Activated naive CD4-positive, alpha-beta T cell treated with anti-CD3 and anti-CD28 coated beads for 36 hours (primary cell): ENCODE measurements at regions of chr7 and their contacts with region 1.

Region 1: GRCh38 chr7:23597094-23598091 is at the start of gene CCDC126:
- DNase-seq: peak; percentile 83
- H3K4me3 Mint-ChIP-seq: peak within 1 kb of the TSS; percentile 83
- H3K27ac Mint-ChIP-seq: peak within 1 kb of the TSS; percentile 20
- H3K4me1 Mint-ChIP-seq: peaks cover 63% of the 10 kb centered on the region
- H3K27me3 Mint-ChIP-seq: no peaks in the 10 kb centered on the region
- total RNA-seq, gene CCDC126: 5.3 to 5.7 TPM

Region 2: DNA sequence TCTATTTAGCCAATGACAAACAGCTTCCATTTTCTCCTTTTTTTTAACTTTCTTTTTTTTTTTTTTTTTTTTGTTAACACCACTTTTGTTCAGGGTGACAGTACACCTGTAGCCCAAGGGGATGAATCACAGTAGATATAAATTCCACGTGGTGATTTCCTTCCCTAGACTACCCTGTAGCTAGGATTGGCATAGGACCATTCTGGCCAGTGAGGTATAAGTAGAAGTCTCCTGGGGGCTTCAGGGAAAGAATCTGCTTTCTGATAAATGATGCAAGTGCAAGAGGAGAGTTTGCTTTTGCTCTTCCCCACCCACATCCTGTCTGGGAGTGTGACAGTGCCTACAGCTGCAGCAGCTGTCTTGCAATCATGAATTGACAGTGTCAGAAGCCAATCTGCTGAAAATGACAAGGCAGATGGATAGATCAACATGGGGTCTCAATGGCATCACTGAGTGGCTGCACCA is 711.6 kb before region 1 on chr7:
- CTCF ChIA-PET with region 1: no interaction called
- intact Hi-C with region 1: loop called (anchors 1 kb)
- DNase-seq: peak; percentile 88
- H3K4me3 Mint-ChIP-seq: peak overlapping the region; percentile 64
- H3K27ac Mint-ChIP-seq: peak overlapping the region; percentile 98
- H3K4me1 Mint-ChIP-seq: peaks cover 54% of the 10 kb centered on the region
- H3K27me3 Mint-ChIP-seq: no peaks in the 10 kb centered on the region

Region 3: DNA sequence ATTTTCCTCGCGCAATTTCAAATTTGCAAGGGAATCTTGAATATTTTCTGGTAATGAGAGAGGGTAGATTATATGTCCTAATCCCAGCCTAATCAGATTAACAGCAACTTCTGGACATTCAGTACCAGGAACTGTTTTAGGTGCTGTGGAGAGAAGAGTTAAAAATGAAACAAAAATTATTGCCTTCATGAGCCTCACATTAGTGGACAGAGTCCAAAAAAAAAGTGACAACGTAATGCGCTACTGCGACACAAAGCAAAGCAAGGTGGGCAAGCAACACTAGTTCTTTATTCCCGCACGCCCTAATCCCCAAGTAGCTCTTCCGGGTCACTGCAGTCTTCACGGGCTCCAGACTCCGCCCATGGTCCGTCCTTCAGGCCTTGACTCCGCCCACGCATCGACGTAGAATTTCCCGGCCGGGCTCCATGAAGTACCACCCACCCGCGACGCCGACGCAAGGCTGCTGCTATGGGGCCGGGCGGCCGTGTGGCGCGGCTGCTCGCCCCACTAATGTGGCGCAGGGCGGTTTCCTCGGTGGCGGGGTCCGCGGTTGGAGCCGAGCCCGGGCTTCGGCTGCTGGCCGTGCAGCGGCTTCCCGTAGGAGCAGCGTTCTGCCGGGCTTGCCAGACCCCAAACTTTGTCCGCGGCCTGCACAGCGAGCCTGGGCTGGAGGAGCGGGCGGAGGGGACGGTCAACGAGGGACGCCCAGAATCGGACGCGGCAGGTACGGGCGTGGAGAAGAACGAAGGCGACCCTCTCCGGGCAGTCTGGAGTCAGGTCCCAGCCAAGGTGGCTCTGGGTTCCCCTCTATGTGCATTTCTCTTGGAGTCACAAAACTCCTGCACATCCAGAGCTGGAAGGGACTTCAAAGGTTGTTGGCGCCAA is 298.3 kb before region 1 on chr7 and contains the start of gene MALSU1:
- CTCF ChIA-PET with region 1: no interaction called
- intact Hi-C with region 1: loop called (anchors 1 kb)
- DNase-seq: peak; percentile 99
- H3K4me3 Mint-ChIP-seq: peak within 1 kb of the TSS; percentile 96
- H3K27ac Mint-ChIP-seq: peak within 1 kb of the TSS; percentile 95
- H3K4me1 Mint-ChIP-seq: peaks cover 30% of the 10 kb centered on the region
- H3K27me3 Mint-ChIP-seq: no peaks in the 10 kb centered on the region
- total RNA-seq, gene MALSU1: 98.4 to 101 TPM

Region 4: DNA sequence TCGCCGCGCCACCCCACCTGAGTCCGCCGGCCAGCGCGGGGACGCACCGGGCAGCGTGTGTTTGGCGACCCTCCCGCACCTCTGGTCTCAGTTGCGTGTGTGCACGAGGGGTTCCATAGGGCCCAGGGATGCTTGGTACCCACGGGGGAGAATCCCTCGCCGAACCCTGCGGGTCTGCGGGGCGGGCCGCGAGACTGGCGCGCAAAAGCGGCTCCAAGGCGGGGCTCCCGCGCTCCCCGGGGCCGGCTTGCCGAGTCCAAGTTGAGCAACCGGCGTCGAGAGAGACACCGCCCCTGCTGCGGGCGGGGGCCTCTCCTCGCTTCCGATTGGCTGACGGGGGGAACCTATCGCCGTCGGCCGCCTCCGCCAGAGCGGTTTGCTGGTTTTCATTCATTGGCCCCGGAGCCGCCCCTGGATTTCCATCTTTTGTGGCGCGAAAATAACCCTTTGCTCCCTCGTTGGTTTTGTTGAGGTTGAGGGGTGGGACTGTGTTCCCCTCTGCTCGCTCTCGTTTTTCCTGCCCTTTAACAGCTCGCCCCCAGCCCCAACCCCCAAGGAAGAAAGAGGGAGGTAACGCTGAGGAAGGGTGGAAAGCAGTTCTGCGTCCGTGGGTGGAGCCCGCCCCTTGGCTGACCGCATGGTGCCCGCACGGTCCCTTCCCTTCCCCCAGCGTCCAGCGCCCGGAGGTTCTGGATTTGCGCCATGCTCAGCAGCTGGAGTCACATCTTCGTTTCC is 123.1 kb before region 1 on chr7:
- CTCF ChIA-PET with region 1: no interaction called
- intact Hi-C with region 1: loop called (anchors 5 kb)
- DNase-seq: peak; percentile 91
- H3K4me3 Mint-ChIP-seq: peak overlapping the region; percentile 76
- H3K27ac Mint-ChIP-seq: peak overlapping the region; percentile 30
- H3K4me1 Mint-ChIP-seq: peaks cover 22% of the 10 kb centered on the region
- H3K27me3 Mint-ChIP-seq: peaks cover 57% of the 10 kb centered on the region

Region 5: GRCh38 chr7:24757353-24758275 is 1160.2 kb after region 1 on chr7 and contains the start of gene GSDME:
- CTCF ChIA-PET with region 1: no interaction called
- intact Hi-C with region 1: loop called (anchors 1 kb)
- DNase-seq: no peak
- H3K4me3 Mint-ChIP-seq: peak within 1 kb of the TSS; percentile 85
- H3K27ac Mint-ChIP-seq: peak within 1 kb of the TSS; percentile 88
- H3K4me1 Mint-ChIP-seq: peaks cover 33% of the 10 kb centered on the region
- H3K27me3 Mint-ChIP-seq: peaks cover 39% of the 10 kb centered on the region
- total RNA-seq, gene GSDME: 6.8 to 6.9 TPM

Region 6: GRCh38 chr7:25125137-25125946 is 1527.9 kb after region 1 on chr7 and contains the start of gene CYCS:
- CTCF ChIA-PET with region 1: no interaction called
- intact Hi-C with region 1: loop called (anchors 2 kb)
- DNase-seq: peak; percentile 100
- H3K4me3 Mint-ChIP-seq: peak within 1 kb of the TSS; percentile 93
- H3K27ac Mint-ChIP-seq: peak within 1 kb of the TSS; percentile 98
- H3K4me1 Mint-ChIP-seq: peaks cover 31% of the 10 kb centered on the region
- H3K27me3 Mint-ChIP-seq: no peaks in the 10 kb centered on the region
- total RNA-seq, gene CYCS: 213 to 224 TPM